ENCODE measurements at regions of chr19 and their contacts with region 1.

Region 1: DNA sequence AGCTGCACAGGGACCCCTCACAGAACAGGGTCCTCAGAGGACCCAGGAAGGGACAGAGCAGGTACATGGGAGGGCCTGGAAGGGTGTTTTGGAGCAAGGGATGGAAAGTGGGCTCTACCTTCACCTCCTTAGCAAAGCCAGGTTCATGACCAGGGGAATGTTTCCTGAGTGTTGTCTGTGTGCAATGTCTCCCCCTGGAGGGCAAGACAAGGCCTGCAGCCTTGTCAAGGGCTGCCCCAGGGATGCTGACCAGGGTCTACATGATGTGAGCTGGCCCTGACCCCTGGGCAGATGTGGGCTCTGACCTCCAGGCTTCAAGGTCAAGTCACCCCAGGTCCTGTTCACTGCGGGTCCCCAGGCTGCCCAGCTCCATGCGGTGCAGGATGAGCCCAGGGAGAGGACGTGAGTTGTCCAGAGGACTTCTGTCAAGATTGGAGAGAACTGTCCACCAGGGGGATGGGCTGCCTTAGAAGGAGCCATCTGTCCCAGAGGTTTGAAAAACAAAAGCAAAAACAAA is 1.0 kb upstream of the CEACAM1 start:
- DNase-seq: no peak
- H3K4me3 ChIP-seq: no peak overlapping the region
- CTCF ChIP-seq: peak; percentile 91

Region 2: GRCh38 chr19:42401365-42402303 is 127.7 kb before region 1 on chr19:
- CTCF ChIA-PET with region 1: no interaction called
- POLR2A ChIA-PET with region 1: no interaction called
- DNase-seq: no peak
- H3K4me3 ChIP-seq: peak overlapping the region; percentile 61
- CTCF ChIP-seq: peak; percentile 74

Region 3: GRCh38 chr19:42440357-42441048 is 88.8 kb before region 1 on chr19:
- CTCF ChIA-PET with region 1: interaction called, 49 read pairs
- POLR2A ChIA-PET with region 1: no interaction called
- DNase-seq: no peak
- H3K4me3 ChIP-seq: no peak overlapping the region
- CTCF ChIP-seq: peak; percentile 82

Region 4: DNA sequence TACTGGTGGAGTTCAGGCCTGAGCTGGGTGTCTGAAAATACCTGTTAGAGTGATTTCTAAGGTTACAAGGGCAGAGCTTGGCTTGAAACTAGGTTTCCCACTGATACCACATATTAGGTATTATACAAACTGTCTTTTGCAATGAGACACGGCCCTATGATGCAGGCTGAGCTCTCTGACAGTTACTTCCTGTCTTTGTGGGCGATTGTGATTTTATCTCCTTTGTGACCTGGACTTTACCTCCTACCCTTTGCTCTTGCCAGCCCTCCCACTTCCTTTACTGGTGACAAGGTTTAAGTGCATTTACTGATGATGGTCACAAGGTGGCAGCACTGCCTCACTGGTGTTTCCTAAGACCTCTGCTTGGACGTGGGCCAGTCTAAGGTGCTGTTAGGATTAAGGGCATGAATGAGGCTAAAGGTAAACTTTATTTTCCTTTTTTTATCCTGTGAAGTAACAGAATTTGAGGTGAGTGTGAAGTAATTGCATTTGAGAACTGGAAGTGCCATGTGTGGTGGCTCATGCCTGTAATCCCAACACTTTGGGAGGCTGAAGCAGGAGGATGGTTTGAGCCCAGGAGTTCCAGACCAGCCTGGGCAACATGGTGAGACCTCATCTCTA is 78.9 kb before region 1 on chr19:
- CTCF ChIA-PET with region 1: interaction called, 170 read pairs
- POLR2A ChIA-PET with region 1: no interaction called
- DNase-seq: peak; percentile 19
- H3K4me3 ChIP-seq: no peak overlapping the region
- CTCF ChIP-seq: peak; percentile 78

Region 5: DNA sequence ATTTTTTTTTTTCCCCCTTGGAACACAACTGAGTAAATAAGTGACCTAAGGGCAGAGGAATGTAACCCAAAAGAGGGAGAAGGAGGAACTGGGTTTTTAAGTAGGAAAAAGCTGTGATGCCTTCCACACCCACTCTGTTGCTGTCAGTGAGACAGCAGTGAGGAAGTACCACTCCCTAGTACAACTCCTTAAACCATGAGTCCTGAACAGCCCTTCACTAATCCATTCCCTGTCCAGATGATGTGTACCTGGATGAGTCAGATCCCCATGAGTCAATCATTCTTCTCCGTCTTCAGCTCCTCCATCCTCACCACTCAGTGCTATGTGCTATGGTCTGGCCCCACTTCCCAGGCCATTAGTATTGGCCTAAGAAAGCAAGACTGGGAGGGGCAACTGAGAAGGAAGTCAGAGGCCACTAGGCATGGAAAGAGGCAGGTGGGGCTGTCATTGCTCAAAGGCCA is 73.7 kb before region 1 on chr19:
- CTCF ChIA-PET with region 1: interaction called, 170 read pairs
- POLR2A ChIA-PET with region 1: no interaction called
- DNase-seq: no peak
- H3K4me3 ChIP-seq: no peak overlapping the region
- CTCF ChIP-seq: no peak

Region 6: DNA sequence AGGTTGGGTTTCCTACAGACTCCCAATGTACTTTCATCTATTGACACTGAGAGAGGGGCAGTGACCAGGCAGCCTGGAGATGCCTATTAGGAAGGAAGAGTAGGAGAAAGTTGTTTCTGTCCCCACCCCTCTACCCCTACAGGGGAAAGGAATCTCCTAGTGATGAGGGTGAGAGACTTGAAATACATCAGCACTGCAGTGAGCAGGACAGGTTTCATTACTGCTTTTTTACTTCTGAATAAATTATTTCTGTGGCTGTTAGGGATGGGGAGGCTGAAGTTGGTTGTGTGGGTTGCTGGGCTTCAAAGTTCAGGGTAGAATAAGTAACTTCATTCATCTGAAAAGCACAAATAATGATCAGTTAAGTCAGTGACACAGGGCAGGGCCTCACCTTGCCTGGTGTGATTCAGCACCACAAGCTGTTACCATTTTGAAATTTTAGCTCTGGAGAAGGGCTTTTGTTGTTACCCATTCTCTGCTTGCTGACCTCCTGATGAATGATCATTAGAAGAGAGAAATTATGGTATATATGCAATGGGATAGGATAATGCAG is 20.3 kb before region 1 on chr19:
- CTCF ChIA-PET with region 1: interaction called, 10 read pairs
- POLR2A ChIA-PET with region 1: no interaction called
- DNase-seq: no peak
- H3K4me3 ChIP-seq: no peak overlapping the region
- CTCF ChIP-seq: no peak

Region 7: DNA sequence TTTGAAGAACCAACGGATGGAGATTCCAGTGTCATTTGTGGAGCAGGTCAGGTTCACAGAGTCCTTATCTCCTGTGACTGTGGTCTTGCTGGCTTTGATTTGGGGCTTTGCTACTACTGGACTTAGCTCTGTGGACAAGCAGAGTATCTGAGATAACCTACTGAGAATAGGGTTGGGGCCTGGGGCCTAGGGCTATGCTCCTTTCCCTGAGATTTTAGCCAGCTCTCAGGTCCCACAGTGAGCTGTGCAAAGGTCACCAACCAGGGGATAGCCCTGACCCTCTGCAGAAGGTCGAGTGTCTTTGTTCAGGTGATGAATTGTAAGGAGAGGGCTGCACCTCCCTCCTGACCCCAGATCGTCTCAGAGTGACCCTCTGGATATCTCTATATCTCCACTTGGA is 10.2 kb before region 1 on chr19:
- CTCF ChIA-PET with region 1: interaction called, 29 read pairs
- POLR2A ChIA-PET with region 1: no interaction called
- DNase-seq: no peak
- H3K4me3 ChIP-seq: no peak overlapping the region
- CTCF ChIP-seq: no peak

Region 8: DNA sequence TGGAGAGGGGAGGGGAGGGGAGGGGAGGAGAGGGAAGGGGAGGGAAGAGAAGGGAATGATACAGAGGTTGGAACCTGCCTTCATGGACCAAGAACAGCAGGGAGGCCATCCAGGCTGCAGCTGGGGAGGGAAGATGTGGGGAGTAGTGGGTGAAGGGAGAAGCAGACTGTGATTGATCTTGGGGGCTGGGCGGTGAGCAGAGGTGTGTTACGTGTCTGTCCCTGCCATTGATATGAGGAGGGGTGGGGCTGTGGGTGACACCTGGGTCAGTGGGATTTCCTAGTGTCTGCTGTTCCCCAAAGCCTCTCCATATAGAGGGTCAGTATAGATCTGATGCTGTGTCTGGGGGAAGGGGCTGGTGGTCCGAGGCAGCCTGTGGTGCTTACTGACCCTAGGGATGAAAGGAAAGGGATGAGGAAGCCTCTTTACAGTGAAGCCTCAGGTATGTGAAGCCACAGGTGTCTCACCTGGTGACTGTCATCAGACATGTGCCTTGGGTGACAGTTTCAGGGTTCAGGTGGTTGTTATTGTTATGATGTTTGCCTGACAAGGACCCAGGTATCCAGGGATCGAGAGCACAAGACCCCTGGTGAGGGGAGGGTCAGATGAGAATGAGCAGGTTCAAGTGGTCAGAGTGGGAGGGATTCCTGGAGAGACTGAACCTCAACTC is 17.7 kb after region 1 on chr19:
- CTCF ChIA-PET with region 1: interaction called, 11 read pairs
- POLR2A ChIA-PET with region 1: no interaction called
- DNase-seq: no peak
- H3K4me3 ChIP-seq: no peak overlapping the region
- CTCF ChIP-seq: no peak

Measured in AG04449 (cell line).